BJ (cell line): ENCODE measurements at regions of chr1 and their contacts with region 1.

Region 1: GRCh38 chr1:116498789-116499628 is 71.8 kb downstream of the CD58 start:
- DNase-seq: no peak
- H3K4me3 ChIP-seq: no peak overlapping the region
- H3K27me3 ChIP-seq: no peaks in the 10 kb centered on the region
- CTCF ChIP-seq: peak; percentile 78

Region 2: GRCh38 chr1:116151739-116152576 is 347.1 kb before region 1 on chr1:
- CTCF ChIA-PET with region 1: interaction called, 95 read pairs
- POLR2A ChIA-PET with region 1: no interaction called
- DNase-seq: peak; percentile 9
- H3K4me3 ChIP-seq: peak overlapping the region; percentile 44
- H3K27me3 ChIP-seq: peaks cover 16% of the 10 kb centered on the region
- CTCF ChIP-seq: peak; percentile 69

Region 3: GRCh38 chr1:116224573-116224972 is 274.4 kb before region 1 on chr1:
- CTCF ChIA-PET with region 1: no interaction called
- POLR2A ChIA-PET with region 1: no interaction called
- DNase-seq: no peak
- H3K4me3 ChIP-seq: no peak overlapping the region
- H3K27me3 ChIP-seq: no peaks in the 10 kb centered on the region
- CTCF ChIP-seq: no peak

Region 4: GRCh38 chr1:116377541-116378529 is 121.2 kb before region 1 on chr1:
- CTCF ChIA-PET with region 1: interaction called, 12 read pairs
- POLR2A ChIA-PET with region 1: no interaction called
- DNase-seq: peak; percentile 79
- H3K4me3 ChIP-seq: peak overlapping the region; percentile 23; the same call in 1 of the 2 replicates
- H3K27me3 ChIP-seq: no peaks in the 10 kb centered on the region
- CTCF ChIP-seq: no peak

Region 5: GRCh38 chr1:116448813-116449281 is 50.2 kb before region 1 on chr1:
- CTCF ChIA-PET with region 1: no interaction called
- POLR2A ChIA-PET with region 1: no interaction called
- DNase-seq: no peak
- H3K4me3 ChIP-seq: no peak overlapping the region
- H3K27me3 ChIP-seq: peaks cover 6% of the 10 kb centered on the region
- CTCF ChIP-seq: no peak

Region 6: DNA sequence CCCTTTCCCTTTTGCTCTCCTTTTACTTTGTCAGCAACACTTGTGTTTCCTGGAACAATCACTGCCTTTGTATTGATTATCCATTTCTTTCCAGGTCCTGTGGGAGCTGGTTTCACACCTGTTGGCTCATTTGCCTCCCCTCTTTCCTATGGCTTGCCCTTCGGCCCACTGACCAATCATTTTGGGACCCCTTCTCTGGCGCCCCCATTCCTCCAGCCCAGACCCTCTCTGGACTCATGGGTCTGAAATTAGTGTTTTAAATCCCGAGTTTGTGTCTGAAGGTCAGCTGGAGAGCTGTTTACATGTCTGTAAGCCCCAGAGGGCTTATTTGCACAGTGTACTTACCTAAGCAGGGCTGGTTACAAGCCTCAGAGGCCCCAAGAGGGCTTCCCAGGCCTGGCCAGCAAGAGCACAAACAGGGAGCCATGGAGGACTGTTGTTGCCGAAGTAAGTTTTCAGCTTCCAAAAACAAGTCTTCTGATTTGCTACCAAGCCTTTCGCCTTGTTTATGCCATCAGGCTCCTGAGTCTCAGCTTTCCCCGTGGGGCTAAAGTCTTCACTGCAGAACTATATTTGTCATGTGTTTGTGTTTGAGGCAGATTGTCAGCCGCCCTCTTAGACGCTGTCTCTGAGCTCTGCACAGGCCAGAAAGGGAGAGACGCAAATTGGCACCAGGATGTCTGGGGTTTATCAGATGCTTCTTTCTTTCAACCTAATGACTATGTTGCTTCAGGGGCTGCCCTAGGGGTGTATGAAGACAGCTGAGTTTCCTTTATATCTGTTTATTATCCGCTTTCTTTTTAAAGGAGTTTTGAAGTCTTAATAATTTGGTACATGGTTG is 32.9 kb before region 1 on chr1:
- CTCF ChIA-PET with region 1: no interaction called
- POLR2A ChIA-PET with region 1: no interaction called
- DNase-seq: no peak
- H3K4me3 ChIP-seq: no peak overlapping the region
- H3K27me3 ChIP-seq: peaks cover 4% of the 10 kb centered on the region; the same call in 1 of the 2 replicates
- CTCF ChIP-seq: no peak